ENCODE measurements at regions of chr17 and their contacts with region 1.

Region 1: DNA sequence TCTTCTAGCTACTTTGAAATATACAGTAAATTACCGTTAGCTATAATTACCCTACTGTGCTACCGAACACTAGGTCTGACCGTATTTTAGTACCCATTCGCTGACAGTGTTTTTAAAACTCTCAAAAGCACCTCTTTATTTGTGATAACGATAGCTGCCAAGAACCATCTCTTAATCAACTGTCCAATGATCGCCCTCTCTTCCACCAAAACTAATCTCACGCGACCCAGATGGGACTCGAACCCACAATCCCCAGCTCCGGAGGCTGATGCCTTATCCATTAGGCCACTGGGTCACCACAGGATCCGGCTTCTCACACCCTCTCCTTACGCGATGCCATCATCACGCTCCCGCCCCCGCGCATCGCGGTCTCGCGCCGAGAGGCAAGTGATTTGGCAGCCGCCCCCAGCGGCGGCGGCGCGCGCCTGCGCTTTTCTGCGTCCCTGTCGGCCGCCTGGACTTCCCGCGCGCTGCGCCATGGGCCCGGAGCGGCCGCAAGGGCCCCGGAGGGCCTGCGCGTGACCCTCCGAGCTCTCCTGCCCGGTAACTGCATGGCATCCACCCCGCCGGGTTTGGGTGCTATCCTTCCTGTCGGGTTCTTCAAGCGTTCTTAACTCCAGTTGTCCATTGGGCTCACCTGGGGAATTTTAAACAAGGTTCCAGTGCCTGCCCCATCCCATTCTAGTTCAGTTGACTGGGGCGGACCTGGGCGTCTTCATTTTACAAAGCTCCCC is 15.7 kb upstream of the KPNA2 start:
- DNase-seq: peak; percentile 97 to 98
- ATAC-seq: peak; percentile 92 to 95 (median 93)
- H3K4me3 ChIP-seq: peak overlapping the region; percentile 63
- H3K4me3 Mint-ChIP-seq: peak overlapping the region; percentile 84
- H3K27ac ChIP-seq: peak overlapping the region; percentile 69
- H3K27ac Mint-ChIP-seq: peak overlapping the region; percentile 95 to 97
- H3K4me1 ChIP-seq: peaks cover 17% of the 10 kb centered on the region
- H3K4me1 Mint-ChIP-seq: peaks cover 14% of the 10 kb centered on the region in 2 donors
- H3K27me3 ChIP-seq: no peaks in the 10 kb centered on the region
- H3K27me3 Mint-ChIP-seq: peaks cover 0 to 5% of the 10 kb centered on the region in 2 donors
- CTCF ChIP-seq: peak; percentile 44

Region 2: GRCh38 chr17:68035523-68036303 is 15.9 kb after region 1 on chr17 and contains the start of gene KPNA2:
- intact Hi-C with region 1: loop called (anchors 1 kb)
- DNase-seq: peak; percentile 88 to 97
- ATAC-seq: peak; percentile 86 to 96 (median 89)
- H3K4me3 ChIP-seq: peak within 1 kb of the TSS; percentile 84
- H3K4me3 Mint-ChIP-seq: peak within 1 kb of the TSS; percentile 93
- H3K27ac ChIP-seq: peak within 1 kb of the TSS; percentile 79
- H3K27ac Mint-ChIP-seq: peak within 1 kb of the TSS; percentile 88 to 90
- H3K4me1 ChIP-seq: no peaks in the 10 kb centered on the region
- H3K4me1 Mint-ChIP-seq: peaks cover 8 to 13% of the 10 kb centered on the region in 2 donors
- H3K27me3 ChIP-seq: no peaks in the 10 kb centered on the region
- H3K27me3 Mint-ChIP-seq: no peaks in the 10 kb centered on the region
- CTCF ChIP-seq: no peak
- total RNA-seq, gene KPNA2: 45.1 to 52.8 (median 49.3) TPM